Cardiac septum (tissue), 1 donor: ENCODE measurements at regions of chr1 and their contacts with region 1.

Region 1: GRCh38 chr1:119662034-119662437 is 14.0 kb upstream of the ZNF697 start:
- DNase-seq: no peak

Region 2: DNA sequence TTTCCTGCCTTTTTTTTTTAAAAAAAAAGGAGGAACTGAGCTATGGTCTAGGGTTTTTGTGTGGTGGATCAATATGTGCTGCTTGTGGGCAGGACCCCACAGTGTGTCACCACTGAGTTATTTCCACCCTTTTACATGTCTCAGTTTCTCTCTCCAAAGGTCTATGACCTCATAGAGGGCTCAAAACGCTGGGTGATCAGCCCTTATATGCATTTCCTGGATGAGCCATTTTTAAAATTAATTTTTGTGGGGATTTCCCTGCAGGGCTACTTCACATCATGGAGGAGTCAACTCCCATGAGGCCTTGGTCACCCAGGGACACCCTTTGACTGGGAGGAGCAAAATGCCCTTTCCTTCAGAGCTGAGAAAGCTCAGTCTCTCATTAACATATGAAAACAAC is 314.2 kb before region 1 on chr1:
- intact Hi-C with region 1: no loop called
- DNase-seq: no peak

Region 3: DNA sequence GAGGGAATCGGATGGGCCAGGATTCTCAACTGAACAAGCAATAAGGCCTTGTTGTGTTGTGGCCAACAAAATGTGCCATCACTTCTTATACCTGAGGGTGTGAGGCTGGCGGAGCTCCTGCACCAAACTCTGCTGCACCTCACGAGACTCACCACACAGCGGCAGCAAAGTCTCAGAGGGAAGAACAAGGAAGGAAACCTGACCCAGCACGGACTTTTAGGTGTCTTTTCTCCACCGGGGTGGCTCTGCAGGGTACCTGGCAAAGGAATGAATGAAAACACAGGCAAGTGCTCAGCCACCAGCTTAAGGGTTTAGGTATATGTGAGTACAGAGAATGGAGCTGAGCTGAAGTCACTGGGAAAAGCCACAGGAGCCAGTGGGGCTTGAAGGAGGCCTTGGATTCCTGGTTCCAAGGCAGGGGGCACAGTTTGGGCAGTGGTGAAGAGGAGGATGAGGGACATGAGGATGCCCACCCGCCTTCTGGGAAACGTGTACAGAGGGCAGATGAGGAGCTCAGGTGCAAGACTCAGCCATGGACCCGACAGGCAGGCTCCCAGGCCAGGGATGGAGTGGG is 186.1 kb before region 1 on chr1:
- intact Hi-C with region 1: loop called (anchors 5 kb)
- DNase-seq: no peak

Region 4: GRCh38 chr1:119635811-119636390 is 26.1 kb before region 1 on chr1:
- intact Hi-C with region 1: no loop called
- DNase-seq: no peak